AG04449 (cell line): ENCODE measurements at regions of chr17 and their contacts with region 1.

Region 1: GRCh38 chr17:49851387-49852291 is 3.8 kb upstream of the TAC4 start:
- DNase-seq: no peak
- H3K4me3 ChIP-seq: peak overlapping the region; percentile 63
- CTCF ChIP-seq: peak; percentile 86

Region 2: GRCh38 chr17:49836111-49837030 is 15.3 kb before region 1 on chr17:
- CTCF ChIA-PET with region 1: interaction called, 19 read pairs
- POLR2A ChIA-PET with region 1: interaction called, 3 read pairs
- DNase-seq: peak; percentile 23
- H3K4me3 ChIP-seq: no peak overlapping the region
- CTCF ChIP-seq: no peak